GM10248 (cell line): ENCODE measurements at regions of chr9 and their contacts with region 1.

Region 1: DNA sequence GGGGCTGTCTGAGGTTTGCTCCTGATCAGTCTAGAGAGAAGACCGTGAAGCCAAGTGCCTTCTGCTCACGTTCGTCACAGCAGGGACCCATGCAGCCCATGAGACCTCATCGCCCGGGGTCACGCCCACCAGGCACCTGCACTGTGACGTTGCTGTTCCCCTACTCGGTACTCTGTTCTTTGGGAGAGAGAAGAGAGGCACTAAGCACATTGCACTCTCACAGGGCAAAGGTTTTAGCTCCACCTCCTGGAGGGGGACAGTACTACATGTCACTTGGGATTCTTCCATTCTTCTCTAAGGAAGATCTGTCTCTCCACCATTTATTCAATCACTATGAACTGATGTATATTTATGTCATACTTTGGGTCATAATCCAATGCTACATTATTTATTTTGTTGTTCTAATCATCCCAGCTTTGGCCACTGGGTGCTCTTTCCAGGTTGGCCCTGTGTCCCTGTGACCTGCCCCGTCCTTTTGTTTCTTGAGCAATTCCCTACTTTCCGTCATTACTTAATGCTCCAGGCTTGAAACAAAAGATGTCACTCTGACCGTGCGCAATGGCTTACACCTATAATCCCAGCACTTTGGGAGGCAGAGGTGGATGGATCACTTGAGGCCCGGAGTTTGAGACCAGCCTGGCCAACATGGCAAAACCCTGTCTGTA is 31.4 kb upstream of the BRD3 start:
- DNase-seq: peak; percentile 75
- CTCF ChIP-seq: peak; percentile 64

Region 2: DNA sequence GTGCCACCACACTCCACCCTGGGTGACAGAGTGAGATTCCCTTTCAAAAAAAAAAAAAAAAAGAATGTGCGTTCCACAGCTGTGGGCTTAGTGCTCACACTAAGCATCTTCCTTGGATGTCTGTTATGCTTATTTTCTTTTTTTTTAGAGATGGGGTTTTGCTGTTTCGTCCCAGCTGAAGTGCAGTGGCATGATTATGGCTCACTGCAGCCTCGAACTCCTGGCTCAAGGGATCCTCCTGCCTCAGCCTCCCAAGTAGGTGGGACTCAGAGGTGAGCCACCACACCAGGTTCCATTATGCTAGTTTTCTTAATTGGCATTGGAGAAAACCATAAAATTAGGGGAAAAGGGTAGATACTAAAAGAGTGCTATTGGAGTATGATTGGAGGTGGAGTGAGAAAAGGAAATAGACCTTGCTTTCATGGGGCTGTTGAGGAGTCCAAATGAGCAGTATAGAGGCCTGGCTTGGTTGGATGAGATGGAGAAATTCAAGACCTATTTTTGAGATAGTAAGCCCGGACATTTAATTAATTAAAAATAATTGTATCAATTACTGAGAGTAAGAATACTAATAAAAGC is 75.0 kb before region 1 on chr9:
- CTCF ChIA-PET with region 1: no interaction called
- POLR2A ChIA-PET with region 1: no interaction called
- DNase-seq: no peak
- CTCF ChIP-seq: no peak

Region 3: GRCh38 chr9:134072367-134073082 is 26.7 kb before region 1 on chr9:
- CTCF ChIA-PET with region 1: interaction called, 10 read pairs
- POLR2A ChIA-PET with region 1: no interaction called
- DNase-seq: no peak
- CTCF ChIP-seq: no peak

Region 4: DNA sequence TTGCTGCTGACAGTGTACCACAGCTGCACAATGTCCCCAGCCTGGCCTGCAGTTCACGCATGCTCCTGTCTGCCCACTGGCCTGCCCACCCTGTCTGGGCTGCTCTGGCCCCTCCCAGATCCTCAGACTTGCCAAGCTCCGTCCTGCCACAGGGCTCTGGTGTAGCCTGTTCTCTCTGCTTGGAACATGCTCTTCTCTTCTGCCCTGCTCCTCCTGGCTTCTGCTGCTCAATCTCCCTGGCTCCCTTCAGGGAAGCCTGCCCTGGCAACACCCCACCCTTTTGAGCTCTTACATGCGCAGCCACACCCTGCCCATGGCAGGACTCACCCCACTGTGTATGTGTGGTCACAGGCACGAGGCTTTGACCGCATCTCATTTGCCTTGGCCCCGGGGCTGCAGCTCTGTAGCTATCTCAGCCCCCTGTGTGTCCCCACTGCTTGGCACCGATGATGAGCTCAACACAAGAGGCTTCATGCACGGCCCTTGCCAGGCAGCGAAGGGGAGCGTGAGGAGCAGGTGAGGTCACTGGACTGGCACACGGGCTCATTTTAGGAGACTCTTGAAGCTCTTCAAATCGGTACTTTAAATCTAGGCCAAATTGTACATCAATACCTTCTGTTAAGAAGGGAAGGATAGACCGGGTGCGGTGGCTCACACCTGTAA is 11.1 kb before region 1 on chr9:
- CTCF ChIA-PET with region 1: interaction called, 21 read pairs
- POLR2A ChIA-PET with region 1: no interaction called
- DNase-seq: no peak
- CTCF ChIP-seq: no peak